Mammary epithelial cell (primary cell): ENCODE measurements at regions of chr9 and their contacts with region 1.

Region 1: DNA sequence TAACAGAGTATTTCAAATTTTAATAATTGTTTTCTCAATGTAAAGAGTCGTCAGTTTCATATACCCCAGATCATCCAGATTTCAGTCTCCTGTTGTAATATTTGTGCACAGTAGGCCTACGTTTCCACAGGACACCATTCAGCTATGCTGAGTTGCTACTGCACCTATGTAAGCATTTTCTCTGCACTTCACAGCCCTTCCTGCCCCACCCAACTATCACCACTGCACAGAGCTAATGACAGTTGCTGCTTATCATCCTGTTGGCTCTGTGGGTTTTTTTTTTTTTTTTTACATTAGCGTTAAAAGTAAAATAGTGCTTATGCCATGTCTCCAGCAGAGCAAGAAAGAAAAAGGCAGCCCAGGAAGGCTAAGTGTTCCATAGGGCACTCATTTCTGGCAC is 5.9 kb upstream of the PRKACG start:
- DNase-seq: no peak
- H3K4me3 ChIP-seq: no peak overlapping the region
- H3K27ac ChIP-seq: no peak overlapping the region
- H3K4me1 ChIP-seq: no peaks in the 10 kb centered on the region
- H3K27me3 ChIP-seq: no peaks in the 10 kb centered on the region
- CTCF ChIP-seq: no peak

Region 2: GRCh38 chr9:68714416-68715180 is 305.2 kb before region 1 on chr9:
- CTCF ChIA-PET with region 1: no interaction called
- dilution Hi-C with region 1: no loop called
- in situ Hi-C with region 1: no loop called
- intact Hi-C with region 1: no loop called
- DNase-seq: no peak
- H3K4me3 ChIP-seq: no peak overlapping the region
- H3K27ac ChIP-seq: no peak overlapping the region
- H3K4me1 ChIP-seq: no peaks in the 10 kb centered on the region
- H3K27me3 ChIP-seq: peaks cover 3% of the 10 kb centered on the region
- CTCF ChIP-seq: no peak

Region 3: GRCh38 chr9:68919661-68920060 is 100.1 kb before region 1 on chr9:
- CTCF ChIA-PET with region 1: no interaction called
- dilution Hi-C with region 1: no loop called
- in situ Hi-C with region 1: no loop called
- intact Hi-C with region 1: no loop called
- DNase-seq: no peak
- H3K4me3 ChIP-seq: no peak overlapping the region
- H3K27ac ChIP-seq: no peak overlapping the region
- H3K4me1 ChIP-seq: no peaks in the 10 kb centered on the region
- H3K27me3 ChIP-seq: no peaks in the 10 kb centered on the region
- CTCF ChIP-seq: no peak

Region 4: DNA sequence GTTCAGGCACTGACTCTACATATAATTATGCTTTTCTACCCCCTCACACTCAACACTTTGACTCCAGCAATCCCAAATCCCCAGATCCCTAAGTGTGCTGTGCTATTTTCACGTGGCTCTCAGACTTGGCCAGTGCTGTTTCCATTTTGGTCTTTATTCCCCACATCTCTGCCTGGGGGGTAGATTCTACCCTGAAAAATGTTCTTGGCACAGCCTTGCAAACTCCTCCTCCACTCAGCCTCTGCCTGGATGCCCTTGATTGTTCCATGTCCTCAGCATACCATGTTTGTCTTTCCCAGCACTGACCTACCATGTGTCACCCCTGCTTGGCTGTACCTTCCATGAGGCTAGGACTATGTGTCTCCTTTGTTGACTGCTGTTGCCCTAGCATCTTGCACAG is 58.8 kb after region 1 on chr9:
- CTCF ChIA-PET with region 1: no interaction called
- dilution Hi-C with region 1: loop called (anchors 5 kb)
- in situ Hi-C with region 1: no loop called
- intact Hi-C with region 1: no loop called
- DNase-seq: no peak
- H3K4me3 ChIP-seq: no peak overlapping the region
- H3K27ac ChIP-seq: no peak overlapping the region
- H3K4me1 ChIP-seq: no peaks in the 10 kb centered on the region
- H3K27me3 ChIP-seq: no peaks in the 10 kb centered on the region
- CTCF ChIP-seq: no peak

Region 5: DNA sequence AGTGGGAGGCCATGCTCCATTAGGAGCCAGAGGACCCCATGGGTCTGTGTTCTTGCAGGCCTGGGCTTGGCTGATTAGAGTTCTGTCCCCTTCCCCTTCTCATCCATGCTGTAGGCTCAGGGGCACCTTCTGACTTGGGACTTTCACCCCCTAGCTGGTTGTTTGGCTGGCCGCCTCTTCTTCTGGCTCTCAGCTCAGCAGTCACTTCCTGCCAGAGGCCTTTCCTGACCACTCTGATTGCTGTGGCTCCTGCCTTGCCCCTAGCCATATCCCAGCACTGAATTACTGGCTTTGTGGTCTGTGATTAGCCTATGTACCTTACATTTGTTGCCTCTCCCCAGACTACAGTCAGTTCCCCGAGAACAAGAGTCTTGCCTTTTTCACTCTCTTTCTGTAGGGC is 319.8 kb after region 1 on chr9:
- CTCF ChIA-PET with region 1: interaction called, 30 read pairs
- dilution Hi-C with region 1: no loop called
- in situ Hi-C with region 1: no loop called
- intact Hi-C with region 1: no loop called
- DNase-seq: peak; percentile 24
- H3K4me3 ChIP-seq: no peak overlapping the region
- H3K27ac ChIP-seq: no peak overlapping the region
- H3K4me1 ChIP-seq: peaks cover 3% of the 10 kb centered on the region
- H3K27me3 ChIP-seq: no peaks in the 10 kb centered on the region
- CTCF ChIP-seq: no peak

Region 6: GRCh38 chr9:69805962-69806515 is 786.2 kb after region 1 on chr9:
- CTCF ChIA-PET with region 1: no interaction called
- dilution Hi-C with region 1: no loop called
- in situ Hi-C with region 1: no loop called
- intact Hi-C with region 1: no loop called
- DNase-seq: no peak
- H3K4me3 ChIP-seq: no peak overlapping the region
- H3K27ac ChIP-seq: no peak overlapping the region
- H3K4me1 ChIP-seq: no peaks in the 10 kb centered on the region
- H3K27me3 ChIP-seq: no peaks in the 10 kb centered on the region
- CTCF ChIP-seq: no peak